Psoas muscle (tissue), 8 donors: ENCODE measurements at regions of chr1 and their contacts with region 1.

Region 1: DNA sequence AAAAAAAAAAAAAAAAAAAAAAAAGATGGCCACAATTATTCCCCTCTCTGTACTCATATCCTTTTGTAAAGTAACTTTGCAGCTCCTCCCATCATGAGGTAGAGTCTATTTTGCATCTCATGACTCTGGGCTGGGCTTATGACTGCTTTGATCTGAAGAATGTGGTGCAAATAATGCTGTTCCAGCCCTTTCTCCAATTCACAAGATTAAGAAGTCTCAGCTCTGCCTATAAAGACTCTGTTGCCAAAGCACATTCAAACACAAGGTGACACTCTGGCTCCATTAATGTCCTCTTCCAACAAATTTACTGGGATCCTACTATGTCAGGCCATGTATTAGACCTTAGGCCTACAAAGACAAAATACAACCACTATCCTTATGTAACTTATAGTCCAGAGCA is 64.8 kb upstream of the PTCH2 start:
- DNase-seq: no peak
- ATAC-seq: no peak
- H3K4me3 ChIP-seq: no peak overlapping the region
- H3K27ac ChIP-seq: no peak overlapping the region
- H3K4me1 ChIP-seq: no peaks in the 10 kb centered on the region
- H3K27me3 ChIP-seq: no peaks in the 10 kb centered on the region
- CTCF ChIP-seq: no peak

Region 2: GRCh38 chr1:44941424-44942324 is 33.8 kb after region 1 on chr1:
- intact Hi-C with region 1: loop called in 1 of 2 experiments (anchors 5 kb)
- DNase-seq: no peak
- ATAC-seq: no peak
- H3K4me3 ChIP-seq: no peak overlapping the region
- H3K27ac ChIP-seq: no peak overlapping the region
- H3K4me1 ChIP-seq: peaks cover 14% of the 10 kb centered on the region
- H3K27me3 ChIP-seq: no peaks in the 10 kb centered on the region
- CTCF ChIP-seq: no peak

Region 3: GRCh38 chr1:44962729-44963128 is 54.8 kb after region 1 on chr1:
- intact Hi-C with region 1: no loop called
- DNase-seq: no peak
- ATAC-seq: no peak
- H3K4me3 ChIP-seq: no peak overlapping the region
- H3K27ac ChIP-seq: no peak overlapping the region
- H3K4me1 ChIP-seq: no peaks in the 10 kb centered on the region
- H3K27me3 ChIP-seq: no peaks in the 10 kb centered on the region
- CTCF ChIP-seq: no peak